Activated naive CD4-positive, alpha-beta T cell treated with anti-CD3 and anti-CD28 coated beads for 36 hours (primary cell): ENCODE measurements at regions of chr16 and their contacts with region 1.

Region 1: GRCh38 chr16:85898521-85899442 is at the start of gene IRF8:
- DNase-seq: peak; percentile 88
- H3K4me3 Mint-ChIP-seq: peak within 1 kb of the TSS; percentile 87
- H3K27ac Mint-ChIP-seq: peak within 1 kb of the TSS; percentile 93
- H3K4me1 Mint-ChIP-seq: peaks cover 39% of the 10 kb centered on the region
- H3K27me3 Mint-ChIP-seq: no peaks in the 10 kb centered on the region
- total RNA-seq, gene IRF8: 323 to 328 TPM

Region 2: DNA sequence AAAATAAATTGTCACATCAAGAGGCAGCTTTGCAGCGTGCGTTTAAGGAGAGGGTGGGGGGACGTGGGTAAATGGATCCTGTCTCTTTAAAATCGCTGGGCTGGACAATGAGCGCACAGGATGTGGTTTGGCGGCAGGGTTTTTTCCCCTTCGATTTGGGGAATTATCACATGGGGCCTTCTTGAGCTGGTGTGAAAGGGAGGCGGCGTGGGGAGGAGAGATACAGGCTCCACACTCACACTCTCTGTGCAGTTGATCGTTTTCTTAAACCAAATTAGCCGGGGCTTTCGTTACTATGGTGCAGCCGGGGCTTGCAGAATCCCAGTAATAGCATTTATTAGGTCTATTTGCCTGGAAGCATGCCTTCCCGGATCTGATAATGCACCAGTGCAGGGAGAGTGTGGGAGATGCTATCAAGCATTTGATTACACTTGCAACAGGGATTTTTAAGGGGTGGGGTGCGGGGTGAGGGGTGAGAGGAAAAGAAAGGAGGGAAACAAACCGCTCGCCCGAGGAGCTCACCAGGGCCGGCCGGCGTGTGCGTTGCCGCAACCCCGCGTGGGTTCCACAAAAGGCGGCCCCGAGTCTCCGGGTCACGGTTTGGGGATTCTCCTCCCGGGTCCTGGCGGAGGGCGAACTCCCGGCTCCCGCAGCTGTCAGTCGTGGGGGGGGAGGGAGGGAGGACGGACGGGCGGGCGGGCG is 344.5 kb before region 1 on chr16:
- CTCF ChIA-PET with region 1: no interaction called
- intact Hi-C with region 1: loop called (anchors 10 kb)
- DNase-seq: peak; percentile 93
- H3K4me3 Mint-ChIP-seq: peak overlapping the region; percentile 79
- H3K27ac Mint-ChIP-seq: peak overlapping the region; percentile 93
- H3K4me1 Mint-ChIP-seq: peaks cover 42% of the 10 kb centered on the region
- H3K27me3 Mint-ChIP-seq: no peaks in the 10 kb centered on the region

Region 3: GRCh38 chr16:85821441-85822135 is 77.2 kb before region 1 on chr16:
- CTCF ChIA-PET with region 1: interaction called, 103 read pairs
- intact Hi-C with region 1: loop called (anchors 1 kb)
- DNase-seq: peak; percentile 89
- H3K4me3 Mint-ChIP-seq: no peak overlapping the region
- H3K27ac Mint-ChIP-seq: no peak overlapping the region
- H3K4me1 Mint-ChIP-seq: peaks cover 11% of the 10 kb centered on the region
- H3K27me3 Mint-ChIP-seq: no peaks in the 10 kb centered on the region

Region 4: DNA sequence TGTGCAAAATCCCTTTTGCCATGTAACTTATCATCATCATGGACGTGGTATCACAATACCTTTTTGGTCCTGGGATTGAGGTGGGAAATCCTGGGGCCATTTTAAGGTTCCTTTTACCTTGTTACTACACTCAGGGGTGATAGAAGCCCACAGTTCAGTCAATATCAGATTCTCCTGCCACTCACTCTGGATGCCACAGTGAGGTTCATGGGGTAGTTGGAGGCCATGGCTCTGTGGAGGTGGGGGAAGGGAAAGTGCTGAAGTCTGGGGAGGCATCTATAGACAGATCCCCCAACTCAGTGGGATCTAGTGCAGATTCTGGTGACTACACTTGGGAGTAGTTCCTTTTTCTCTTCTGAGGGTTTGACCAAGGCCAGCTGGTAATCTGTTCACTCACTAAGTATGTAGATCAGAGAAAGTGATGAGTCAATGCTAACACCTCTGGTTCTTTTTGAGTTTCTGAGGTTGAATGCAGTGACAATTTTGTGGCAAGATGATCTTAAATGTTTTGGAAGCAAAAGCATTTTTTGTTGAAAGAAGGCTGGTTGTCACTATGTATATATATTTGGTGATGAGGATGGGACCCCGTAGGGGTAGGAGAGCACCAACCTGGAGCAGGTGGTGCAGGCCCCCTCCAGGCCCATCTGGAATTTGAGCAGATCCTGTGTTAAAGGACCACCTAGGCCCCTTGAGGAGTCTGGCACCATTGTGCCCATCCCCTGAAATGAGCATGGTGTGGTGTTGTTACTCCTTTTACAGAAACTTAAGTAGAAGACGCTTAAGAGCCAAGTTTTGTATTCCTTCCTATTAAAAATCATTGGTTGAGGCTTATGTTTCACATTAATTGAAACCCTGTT is 18.6 kb before region 1 on chr16:
- CTCF ChIA-PET with region 1: no interaction called
- intact Hi-C with region 1: loop called (anchors 2 kb)
- DNase-seq: peak; percentile 56
- H3K4me3 Mint-ChIP-seq: no peak overlapping the region
- H3K27ac Mint-ChIP-seq: peak overlapping the region; percentile 57
- H3K4me1 Mint-ChIP-seq: peaks cover 44% of the 10 kb centered on the region
- H3K27me3 Mint-ChIP-seq: peaks cover 17% of the 10 kb centered on the region

Region 5: DNA sequence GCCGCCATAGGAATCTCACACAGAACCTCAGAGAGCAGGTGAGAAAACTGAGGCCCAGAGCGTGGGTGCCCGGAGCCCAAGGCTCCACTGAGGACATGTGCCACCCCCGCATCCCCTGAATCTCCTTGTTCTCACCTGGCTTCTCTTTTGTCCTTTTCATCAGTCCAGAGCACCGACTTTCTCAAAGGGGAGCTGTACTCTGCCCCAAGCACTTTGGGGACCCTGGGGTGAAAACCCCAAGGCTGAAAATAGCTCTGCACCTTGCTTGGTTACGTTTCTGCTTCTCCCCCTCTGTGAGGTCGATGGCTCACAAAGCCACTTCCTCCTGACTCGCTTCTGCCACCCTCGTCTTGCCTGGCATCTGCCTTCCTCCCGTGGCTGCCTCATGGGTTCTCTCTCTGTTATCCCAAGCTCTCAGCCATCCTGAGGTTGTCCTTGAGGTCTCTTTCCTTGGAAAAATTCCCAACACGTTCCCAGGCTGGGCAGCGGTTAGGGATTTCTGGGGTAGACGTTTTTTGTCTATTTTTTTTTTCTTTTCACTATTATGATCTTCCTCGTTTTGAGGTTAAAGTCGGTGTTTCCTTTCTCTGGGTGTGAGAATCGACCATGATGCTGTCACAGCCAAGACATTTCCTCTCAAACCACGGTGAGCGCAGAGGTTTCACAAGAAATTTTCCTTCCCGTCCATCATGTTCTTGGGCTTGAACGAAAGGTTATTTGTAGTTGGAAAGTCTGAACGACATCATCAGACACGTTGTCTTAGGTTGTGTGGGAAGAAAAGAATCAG is 37.4 kb after region 1 on chr16:
- CTCF ChIA-PET with region 1: no interaction called
- intact Hi-C with region 1: loop called (anchors 1 kb)
- DNase-seq: peak; percentile 90
- H3K4me3 Mint-ChIP-seq: peak overlapping the region; percentile 55
- H3K27ac Mint-ChIP-seq: peak overlapping the region; percentile 96
- H3K4me1 Mint-ChIP-seq: peaks cover 62% of the 10 kb centered on the region
- H3K27me3 Mint-ChIP-seq: no peaks in the 10 kb centered on the region

Region 6: DNA sequence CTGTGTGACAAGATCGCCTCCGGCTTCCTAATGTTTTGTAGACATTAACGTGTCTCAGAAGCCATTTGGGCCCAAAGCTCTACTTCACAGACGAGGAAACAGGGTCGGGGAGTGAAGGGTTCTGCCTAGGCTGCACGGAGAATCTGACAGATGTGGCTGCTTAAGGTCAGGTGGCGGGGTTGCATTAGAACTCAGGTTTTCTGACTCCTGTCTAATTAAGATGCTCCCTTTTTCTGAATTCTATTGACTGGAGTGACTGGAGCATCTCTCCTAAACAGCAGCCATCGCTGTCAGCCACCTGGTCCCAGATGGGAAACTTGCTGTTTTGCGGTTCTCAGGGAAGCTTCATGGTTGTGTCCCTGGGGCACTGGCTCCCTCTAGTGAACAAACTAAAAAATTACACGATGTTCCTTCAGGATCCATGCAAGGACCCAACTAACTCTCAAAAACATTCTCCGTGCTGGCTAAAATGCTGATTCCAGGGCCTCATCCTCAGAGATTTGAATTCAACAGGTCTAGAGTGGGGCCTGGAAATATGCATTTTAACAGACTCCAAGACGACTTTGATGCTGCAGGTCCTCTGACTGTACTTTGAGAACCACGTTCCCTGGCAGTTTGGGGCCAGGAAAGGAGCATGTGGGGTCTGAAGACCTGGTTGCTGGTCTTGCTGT is 117.6 kb after region 1 on chr16:
- CTCF ChIA-PET with region 1: interaction called, 8 read pairs
- intact Hi-C with region 1: loop called (anchors 1 kb)
- DNase-seq: peak; percentile 67
- H3K4me3 Mint-ChIP-seq: no peak overlapping the region
- H3K27ac Mint-ChIP-seq: no peak overlapping the region
- H3K4me1 Mint-ChIP-seq: peaks cover 21% of the 10 kb centered on the region
- H3K27me3 Mint-ChIP-seq: peaks cover 40% of the 10 kb centered on the region